Cardiac septum (tissue), 1 donor: ENCODE measurements at regions of chr17 and their contacts with region 1.

Region 1: DNA sequence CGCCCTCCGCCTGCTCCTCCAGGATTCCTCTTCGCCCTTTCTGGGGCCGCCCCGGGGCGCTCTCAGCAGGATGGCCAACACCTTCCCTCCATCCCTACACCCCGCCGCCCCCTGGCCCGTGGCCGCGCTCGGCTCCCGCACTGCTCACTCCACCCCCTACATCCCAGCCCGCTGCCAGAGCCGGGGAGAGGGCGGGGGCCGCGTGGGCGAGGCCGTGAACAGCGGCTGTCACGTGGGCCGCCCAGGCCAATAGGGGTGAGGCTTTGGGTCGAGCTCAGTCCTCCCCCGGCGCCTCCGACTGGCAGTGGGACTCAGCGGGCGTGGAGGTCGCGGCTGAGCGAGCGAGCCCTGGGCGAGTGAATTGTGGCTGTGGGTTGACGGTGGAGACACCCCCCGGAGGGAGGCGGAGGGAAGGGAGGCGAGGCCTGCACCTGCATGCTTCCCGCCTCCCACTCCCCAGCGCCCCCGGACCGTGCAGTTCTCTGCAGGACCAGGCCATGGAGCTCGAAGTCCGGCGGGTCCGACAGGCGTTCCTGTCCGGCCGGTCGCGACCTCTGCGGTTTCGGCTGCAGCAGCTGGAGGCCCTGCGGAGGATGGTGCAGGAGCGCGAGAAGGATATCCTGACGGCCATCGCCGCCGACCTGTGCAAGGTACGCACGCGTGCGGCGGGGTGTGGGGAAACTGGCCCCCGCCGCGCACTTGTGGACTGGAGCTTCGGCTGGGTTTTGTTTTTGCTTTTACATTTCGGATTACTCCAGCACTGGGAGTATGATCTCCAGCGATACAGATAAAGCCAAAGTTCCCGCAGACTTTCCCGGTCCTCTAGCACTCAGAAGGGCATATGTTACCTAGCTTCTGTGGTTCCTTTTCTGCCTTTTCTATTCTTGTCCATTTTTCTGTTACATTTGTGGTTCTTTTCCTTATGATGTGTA is at the start of gene ALDH3A2:
- DNase-seq: peak; percentile 99
- total RNA-seq, gene ALDH3A2: 107 TPM

Region 2: GRCh38 chr17:19377602-19378392 is 270.9 kb before region 1 on chr17:
- intact Hi-C with region 1: loop called (anchors 10 kb)
- DNase-seq: peak; percentile 100

Region 3: GRCh38 chr17:19513897-19514488 is 134.7 kb before region 1 on chr17:
- intact Hi-C with region 1: loop called (anchors 2 kb)
- DNase-seq: peak; percentile 80

Region 4: GRCh38 chr17:19753049-19753444 is 104.3 kb after region 1 on chr17:
- intact Hi-C with region 1: loop called (anchors 5 kb)
- DNase-seq: peak; percentile 90